H1 (cell line): ENCODE measurements at regions of chr11 and their contacts with region 1.

Region 1: DNA sequence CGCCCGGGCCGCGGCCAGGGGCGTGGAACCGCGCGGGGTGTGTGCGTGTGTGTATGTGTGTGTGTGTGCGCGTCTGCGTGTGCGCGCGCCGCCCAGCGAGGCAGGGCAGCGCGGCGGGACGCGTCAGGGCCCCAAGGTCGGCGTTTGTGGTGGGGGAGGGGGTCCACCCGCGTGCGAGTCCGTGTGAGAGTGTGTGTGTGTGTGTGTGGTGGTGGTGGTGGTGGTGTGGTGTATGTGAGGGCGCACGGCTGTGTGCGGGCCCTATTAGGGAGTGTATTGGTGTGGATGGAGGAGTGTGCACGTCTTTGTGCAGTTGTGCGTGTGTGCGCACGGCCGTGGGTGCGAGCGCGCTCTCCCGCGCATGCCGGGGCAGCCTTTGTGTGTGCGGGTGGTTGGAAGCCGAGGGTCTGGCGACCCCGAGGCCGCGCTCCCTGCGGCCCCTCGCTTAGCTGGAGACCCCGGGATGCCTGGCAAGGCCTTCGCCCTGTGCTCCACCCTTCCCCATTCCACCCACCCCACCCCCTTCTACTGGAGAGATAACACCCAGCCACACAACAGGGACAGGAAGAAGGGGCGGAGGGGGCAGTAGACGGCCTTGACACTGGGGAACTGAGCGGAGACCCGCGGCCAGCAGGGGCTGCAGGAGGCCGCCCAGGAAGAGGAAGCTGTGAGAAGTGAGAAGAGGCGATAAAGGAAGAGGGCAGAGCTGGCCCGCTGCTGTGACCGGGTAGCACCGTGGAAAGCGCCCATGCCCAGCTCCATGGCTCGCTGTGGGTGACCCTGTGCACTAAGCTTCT is 528 bp upstream of the ARRB1 start:
- DNase-seq: peak in 1 of 2 experiments; percentile 63
- H3K4me3 ChIP-seq: peak overlapping the region; percentile 53 to 82 (median 58)
- H3K27ac ChIP-seq: no peak overlapping the region
- H3K4me1 ChIP-seq: peaks cover 10 to 28% (median 15%) of the 10 kb centered on the region in 4 experiments
- H3K27me3 ChIP-seq: peaks cover 4 to 11% (median 10%) of the 10 kb centered on the region in 4 experiments; a peak in 6 of 7 replicates
- CTCF ChIP-seq: peak in 2 of 3 experiments; percentile 13 to 22; a peak in 2 of 4 replicates
- EP300 ChIP-seq: no peak
- POLR2A ChIP-seq: no peak
- RAD21 ChIP-seq: peak; percentile 5 to 22; a peak in 1 of 4 replicates

Region 2: DNA sequence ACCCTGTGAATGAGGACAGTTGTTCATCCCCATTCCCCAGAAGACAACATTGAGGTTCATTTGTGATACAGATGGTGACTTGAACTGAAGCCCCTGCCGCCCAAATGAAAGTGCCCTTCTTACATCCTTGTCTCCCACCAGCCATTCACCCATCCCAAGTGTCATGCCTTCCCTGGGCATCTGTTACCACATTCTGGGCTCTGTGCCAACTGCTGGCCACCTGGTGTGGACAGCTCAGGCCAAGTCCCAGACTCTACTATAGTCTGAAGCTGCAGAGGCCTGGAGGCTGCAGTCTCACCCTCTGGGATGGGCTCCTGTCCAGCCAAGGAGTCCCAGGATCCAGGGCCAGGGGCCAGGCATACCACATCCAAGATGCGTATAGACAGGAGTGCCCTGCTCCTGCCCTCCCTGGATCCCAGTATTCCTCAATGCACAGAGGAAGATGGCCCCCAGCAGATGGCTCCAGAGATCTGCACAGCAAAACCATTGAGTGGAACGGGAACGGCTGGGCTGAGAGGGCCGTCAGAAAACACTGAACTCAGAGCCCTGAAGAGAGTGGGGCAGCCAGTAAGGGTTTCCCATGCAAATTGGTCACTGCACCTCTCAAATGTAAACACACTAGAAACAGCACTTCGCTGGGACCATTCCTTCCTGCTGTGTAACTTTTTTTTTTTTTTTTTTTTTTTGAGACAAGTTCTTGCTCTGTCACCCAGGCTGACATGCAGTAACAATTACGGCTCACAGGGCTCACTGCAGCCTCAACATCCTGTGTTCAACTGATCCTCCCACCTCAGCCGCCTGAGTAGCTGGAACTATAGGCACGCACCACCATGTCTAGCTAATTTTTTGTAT is 23.3 kb before region 1 on chr11:
- CTCF ChIA-PET with region 1: interaction called, 3 read pairs
- POLR2A ChIA-PET with region 1: interaction called, 20 read pairs
- DNase-seq: peak in 1 of 2 experiments; percentile 65
- H3K4me3 ChIP-seq: no peak overlapping the region
- H3K27ac ChIP-seq: no peak overlapping the region
- H3K4me1 ChIP-seq: peaks cover 0 to 13% (median 2%) of the 10 kb centered on the region in 4 experiments; a peak in 4 of 7 replicates
- H3K27me3 ChIP-seq: no peaks in the 10 kb centered on the region
- CTCF ChIP-seq: peak; percentile 60 to 77 (median 70)
- EP300 ChIP-seq: no peak
- POLR2A ChIP-seq: no peak
- RAD21 ChIP-seq: peak; percentile 86 to 90

Region 3: GRCh38 chr11:75365711-75366181 is 13.8 kb after region 1 on chr11:
- CTCF ChIA-PET with region 1: interaction called, 10 read pairs
- POLR2A ChIA-PET with region 1: interaction called, 3 read pairs
- DNase-seq: no peak
- H3K4me3 ChIP-seq: no peak overlapping the region
- H3K27ac ChIP-seq: no peak overlapping the region
- H3K4me1 ChIP-seq: no peaks in the 10 kb centered on the region
- H3K27me3 ChIP-seq: no peaks in the 10 kb centered on the region
- CTCF ChIP-seq: no peak
- EP300 ChIP-seq: no peak
- POLR2A ChIP-seq: no peak
- RAD21 ChIP-seq: no peak

Region 4: DNA sequence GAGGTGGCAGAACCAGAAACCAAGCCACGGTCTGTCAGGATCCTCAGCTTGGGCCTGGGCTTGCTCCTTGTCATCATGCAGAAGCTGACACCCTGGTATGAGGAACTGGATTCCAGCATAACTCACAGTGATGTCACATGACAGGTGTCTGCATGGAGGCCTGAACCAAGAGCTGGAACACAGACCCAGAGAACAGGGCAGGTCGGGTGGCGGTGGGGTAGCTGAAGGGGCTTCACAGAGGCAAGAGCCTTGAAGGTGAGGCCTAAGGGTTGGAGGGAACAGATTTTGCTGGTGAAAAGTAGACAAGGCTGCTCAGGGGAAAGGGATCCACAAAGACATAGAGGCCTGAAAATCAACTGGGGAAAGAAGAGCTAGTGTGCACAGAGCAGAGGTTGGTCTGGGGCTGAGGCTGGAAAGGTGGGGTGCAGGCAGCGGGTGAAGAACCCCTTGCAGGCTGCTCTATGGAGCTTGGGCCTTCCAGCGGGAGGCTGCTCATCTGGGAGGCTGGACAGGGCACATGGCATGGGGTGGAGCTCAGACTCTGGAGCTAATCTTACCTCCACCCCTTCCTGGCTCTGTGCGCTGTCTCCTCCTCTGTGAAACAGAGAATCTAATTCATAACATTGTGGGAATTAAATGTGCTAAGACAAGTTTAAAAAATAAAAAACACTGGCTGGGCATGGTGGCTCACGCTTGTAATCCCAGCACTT is 28.9 kb after region 1 on chr11:
- CTCF ChIA-PET with region 1: interaction called, 10 read pairs
- POLR2A ChIA-PET with region 1: interaction called, 4 read pairs
- DNase-seq: no peak
- H3K4me3 ChIP-seq: no peak overlapping the region
- H3K27ac ChIP-seq: no peak overlapping the region
- H3K4me1 ChIP-seq: peaks cover 0 to 3% (median 1%) of the 10 kb centered on the region in 4 experiments; a peak in 2 of 7 replicates
- H3K27me3 ChIP-seq: no peaks in the 10 kb centered on the region
- CTCF ChIP-seq: no peak
- EP300 ChIP-seq: no peak
- POLR2A ChIP-seq: no peak
- RAD21 ChIP-seq: no peak

Region 5: DNA sequence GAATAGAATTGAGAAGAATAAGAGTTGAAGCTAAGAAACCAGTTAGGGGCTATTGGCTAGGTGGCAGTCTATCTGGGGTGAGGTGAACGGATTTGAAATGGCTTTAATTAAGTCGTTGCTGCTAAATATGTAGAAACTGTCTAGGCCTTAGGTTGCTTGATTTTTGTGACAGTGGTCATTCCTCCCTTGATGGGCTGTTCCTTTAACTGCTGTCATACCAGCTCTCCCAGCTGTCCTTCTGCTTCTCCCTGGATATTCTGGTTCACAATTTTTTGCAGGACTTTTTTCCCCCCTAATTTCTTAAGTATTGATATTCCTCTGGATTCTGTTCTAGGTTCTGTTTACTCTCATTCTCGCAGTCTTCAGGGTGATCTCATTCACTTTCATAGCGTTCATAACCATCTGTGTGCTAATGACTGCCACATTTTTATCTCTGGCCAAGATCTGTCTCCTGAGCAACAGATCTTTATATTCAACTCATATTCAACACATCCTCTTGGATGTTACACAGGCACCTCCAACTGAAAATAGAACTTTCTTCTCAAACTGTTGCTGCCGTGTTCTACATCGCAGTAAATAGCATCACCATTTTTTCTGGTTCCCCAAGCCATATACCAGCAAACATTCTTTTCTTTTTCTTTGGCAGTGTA is 597.2 kb after region 1 on chr11:
- CTCF ChIA-PET with region 1: no interaction called
- POLR2A ChIA-PET with region 1: no interaction called
- DNase-seq: no peak
- H3K4me3 ChIP-seq: no peak overlapping the region
- H3K27ac ChIP-seq: no peak overlapping the region
- H3K4me1 ChIP-seq: peaks cover 0 to 7% (median 1%) of the 10 kb centered on the region in 4 experiments; a peak in 3 of 7 replicates
- H3K27me3 ChIP-seq: no peaks in the 10 kb centered on the region
- CTCF ChIP-seq: no peak
- EP300 ChIP-seq: no peak
- POLR2A ChIP-seq: no peak
- RAD21 ChIP-seq: no peak